ENCODE measurements at regions of chr10 and their contacts with region 1.

Region 1: DNA sequence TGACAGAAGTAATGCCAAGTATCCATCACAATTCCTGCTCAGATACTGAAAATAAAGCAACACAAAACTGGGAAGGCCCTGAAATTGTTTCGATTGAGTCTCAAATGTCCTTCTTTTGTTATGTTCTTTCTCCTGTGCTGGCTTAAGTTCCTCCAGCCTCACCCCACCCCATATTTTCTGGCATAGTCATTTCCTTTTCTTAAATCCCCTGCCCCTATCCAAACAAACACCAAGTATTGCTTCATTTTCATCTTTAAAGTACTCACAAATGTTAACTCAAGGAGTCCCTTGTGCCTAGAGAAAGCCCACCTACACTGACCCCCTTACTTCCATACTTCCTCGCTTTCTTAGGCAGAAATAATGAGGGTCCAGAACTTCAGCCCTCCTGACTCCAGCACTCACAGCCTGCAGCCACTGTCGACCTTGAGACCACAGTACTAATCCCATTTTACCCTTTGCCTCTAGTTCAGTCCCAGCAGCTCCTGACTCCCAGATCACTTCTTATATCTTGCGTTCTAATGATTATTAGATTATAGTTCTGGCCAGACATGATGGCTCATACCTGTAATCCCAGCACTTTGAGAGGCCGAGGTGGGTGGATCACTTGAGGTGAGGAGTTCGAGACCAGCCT is 73.2 kb upstream of the ST8SIA6 start:
- DNase-seq: no peak

Region 2: GRCh38 chr10:16761300-16761699 is 766.3 kb before region 1 on chr10:
- intact Hi-C with region 1: loop called in 1 of 2 experiments (anchors 5 kb)
- DNase-seq: no peak

Region 3: GRCh38 chr10:18532881-18533535 is 1005.4 kb after region 1 on chr10:
- intact Hi-C with region 1: no loop called
- DNase-seq: no peak